ENCODE measurements at regions of chr12 and their contacts with region 1.

Region 1: DNA sequence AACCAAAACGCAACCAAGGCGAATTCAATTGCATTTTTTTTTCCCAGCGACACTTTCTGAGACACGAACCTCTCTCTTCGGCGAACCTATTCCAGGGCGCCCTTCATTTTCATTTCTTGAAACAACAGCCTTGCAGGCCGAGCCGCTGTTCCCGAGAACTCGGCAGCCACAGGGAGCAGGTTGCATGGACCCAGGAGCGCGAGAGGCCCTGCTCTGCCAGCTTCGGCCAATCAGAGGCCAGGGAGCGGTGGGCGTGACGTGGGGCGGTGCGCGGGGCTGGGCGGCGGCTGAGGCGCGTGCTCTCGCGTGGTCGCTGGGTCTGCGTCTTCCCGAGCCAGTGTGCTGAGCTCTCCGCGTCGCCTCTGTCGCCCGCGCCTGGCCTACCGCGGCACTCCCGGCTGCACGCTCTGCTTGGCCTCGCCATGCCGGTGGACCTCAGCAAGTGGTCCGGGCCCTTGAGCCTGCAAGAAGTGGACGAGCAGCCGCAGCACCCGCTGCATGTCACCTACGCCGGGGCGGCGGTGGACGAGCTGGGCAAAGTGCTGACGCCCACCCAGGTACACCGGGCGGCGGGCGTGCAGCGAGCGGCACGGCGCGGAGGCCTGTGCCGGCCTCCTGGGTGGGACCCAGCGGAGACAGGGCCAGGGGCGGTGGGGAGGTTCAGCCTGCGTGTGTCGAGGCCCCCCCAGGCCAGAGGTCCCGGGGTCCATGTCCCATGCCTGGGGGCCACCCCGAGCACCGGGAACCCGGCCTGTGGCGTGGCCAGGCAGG is at the start of gene PEBP1:
- DNase-seq: peak; percentile 96 to 99 (median 98)
- H3K4me3 ChIP-seq: peak within 1 kb of the TSS; percentile 68 to 100 (median 97)
- H3K27ac ChIP-seq: peak within 1 kb of the TSS; percentile 76 to 99 (median 98)
- H3K27me3 ChIP-seq: no peaks in the 10 kb centered on the region
- CTCF ChIP-seq: peak in 35 of 56 donors; percentile 5 to 55 (median 28)
- total RNA-seq, gene PEBP1: 437 to 1,009 (median 790) TPM

Region 2: DNA sequence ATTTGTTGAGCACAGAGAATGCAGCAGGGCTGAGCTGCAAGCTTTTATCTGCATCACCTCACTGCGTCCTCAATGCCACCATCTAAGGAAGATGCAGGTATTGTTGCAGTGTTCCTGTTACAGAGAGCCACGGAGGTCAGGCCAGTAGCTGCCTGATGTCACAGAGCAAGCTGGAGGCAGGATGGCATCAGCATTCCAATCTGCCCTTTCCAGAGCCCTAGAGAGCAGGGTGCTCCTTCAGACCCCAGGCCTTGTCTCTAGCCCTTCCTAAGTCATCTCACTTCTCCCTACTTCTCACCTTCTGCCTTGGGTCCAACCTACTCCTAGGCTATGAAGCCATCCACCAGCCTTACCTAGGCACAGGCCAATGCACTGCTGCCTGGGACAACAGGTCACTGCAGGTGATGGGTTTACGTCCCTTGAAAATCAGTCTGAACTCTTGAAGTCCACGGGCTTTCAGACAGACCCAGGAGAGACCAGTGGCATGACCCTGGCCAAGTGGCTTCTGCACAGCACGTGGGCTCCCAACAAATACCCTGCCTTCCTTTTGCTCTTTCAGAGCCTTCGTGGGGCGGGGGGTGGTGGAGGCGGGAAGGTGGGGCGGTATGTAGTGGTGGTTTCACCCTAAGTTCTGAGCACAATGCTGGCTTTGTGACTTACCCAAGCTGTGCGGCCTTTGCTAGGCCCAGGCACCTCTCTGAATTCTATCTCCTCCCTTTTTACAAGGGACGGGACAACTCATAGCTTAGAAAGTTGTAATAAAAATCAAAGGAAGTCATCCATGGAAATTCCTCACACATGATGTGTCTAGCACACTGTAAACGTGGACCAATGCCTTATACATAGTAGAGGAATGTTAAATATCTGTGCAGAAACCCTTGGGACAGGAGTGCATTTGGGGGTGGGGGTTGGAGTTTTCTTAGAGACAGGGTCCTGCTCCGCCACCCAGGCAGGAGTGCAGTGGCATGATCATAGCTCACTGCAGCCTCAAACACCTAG is 303.2 kb before region 1 on chr12:
- intact Hi-C with region 1: no loop called
- DNase-seq: no peak
- H3K4me3 ChIP-seq: no peak overlapping the region
- H3K27ac ChIP-seq: no peak overlapping the region
- H3K27me3 ChIP-seq: peaks cover 0 to 9% (median 0%) of the 10 kb centered on the region in 45 donors
- CTCF ChIP-seq: no peak

Region 3: DNA sequence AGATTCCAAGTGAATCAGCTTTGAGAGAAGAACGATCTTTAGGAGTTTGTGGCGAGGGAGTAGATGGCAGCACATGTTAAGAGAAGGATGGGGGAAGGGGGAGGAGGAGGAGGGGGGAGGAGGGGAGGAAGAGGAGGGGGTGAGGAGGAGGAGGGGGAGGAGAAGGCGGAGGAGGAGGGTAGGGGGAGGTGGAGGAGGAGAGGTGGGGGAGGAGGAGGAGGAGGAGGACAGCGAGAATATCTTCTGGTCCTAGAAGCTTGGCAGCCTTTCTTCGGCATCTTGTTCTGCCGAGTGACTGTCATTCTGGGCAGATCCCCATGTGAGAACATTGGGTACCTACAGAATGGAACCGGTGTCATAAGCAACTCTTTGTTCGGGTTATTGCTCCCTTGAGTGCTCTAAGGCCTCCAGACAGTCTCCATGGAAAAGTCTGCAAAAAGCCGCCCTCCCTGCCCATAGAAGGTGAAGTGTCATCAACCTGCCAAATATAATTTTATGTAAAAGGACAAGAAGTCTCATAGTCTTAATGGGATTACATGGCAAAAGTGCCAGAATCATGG is 112.6 kb before region 1 on chr12:
- intact Hi-C with region 1: no loop called
- DNase-seq: peak in 1 of 10 donors; percentile 11
- H3K4me3 ChIP-seq: no peak overlapping the region
- H3K27ac ChIP-seq: peak overlapping the region in 43 of 59 donors; percentile 7 to 86 (median 64)
- H3K27me3 ChIP-seq: no peaks in the 10 kb centered on the region
- CTCF ChIP-seq: no peak

Region 4: GRCh38 chr12:118061011-118061875 is 74.7 kb before region 1 on chr12 and contains the start of gene WSB2:
- intact Hi-C with region 1: loop called (anchors 2 to 5 kb)
- DNase-seq: peak; percentile 62 to 88 (median 72)
- H3K4me3 ChIP-seq: peak within 1 kb of the TSS; percentile 67 to 93 (median 83)
- H3K27ac ChIP-seq: peak within 1 kb of the TSS; percentile 86 to 99 (median 96)
- H3K27me3 ChIP-seq: no peaks in the 10 kb centered on the region
- CTCF ChIP-seq: no peak
- total RNA-seq, gene WSB2: 117 to 328 (median 199) TPM

Region 5: DNA sequence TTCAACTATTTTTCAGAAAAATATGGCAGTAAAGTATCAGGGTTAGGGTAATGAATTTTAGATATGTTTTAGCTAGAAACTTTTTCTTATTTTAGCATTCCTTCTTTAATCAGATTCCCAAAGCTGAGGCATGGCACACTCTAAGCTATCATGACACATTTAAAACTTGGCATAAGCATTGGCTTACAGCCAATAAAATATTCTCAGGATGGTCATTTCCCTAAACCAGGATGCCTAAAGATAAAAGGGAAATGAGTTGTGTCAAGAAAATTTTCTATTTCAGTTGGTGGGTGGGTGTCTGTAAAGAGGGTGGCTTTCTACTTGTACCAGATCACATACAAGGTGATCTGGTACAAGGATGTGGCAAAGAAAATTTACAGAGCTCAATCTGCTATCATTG is 47.7 kb after region 1 on chr12:
- intact Hi-C with region 1: loop called (anchors 2 to 5 kb)
- DNase-seq: no peak
- H3K4me3 ChIP-seq: no peak overlapping the region
- H3K27ac ChIP-seq: peak overlapping the region in 34 of 59 donors; percentile 17 to 76 (median 50)
- H3K27me3 ChIP-seq: no peaks in the 10 kb centered on the region
- CTCF ChIP-seq: no peak

Region 6: GRCh38 chr12:118189741-118190191 is 53.8 kb after region 1 on chr12:
- intact Hi-C with region 1: loop called (anchors 2 to 5 kb)
- DNase-seq: peak; percentile 53 to 70 (median 63)
- H3K4me3 ChIP-seq: peak overlapping the region; percentile 41 to 75 (median 64)
- H3K27ac ChIP-seq: peak overlapping the region; percentile 82 to 100 (median 97)
- H3K27me3 ChIP-seq: no peaks in the 10 kb centered on the region
- CTCF ChIP-seq: peak in 2 of 56 donors; percentile 14 to 31

Measured in dorsolateral prefrontal cortex (tissue), 120 donors.